ENCODE measurements at regions of chr12 and their contacts with region 1.

Region 1: DNA sequence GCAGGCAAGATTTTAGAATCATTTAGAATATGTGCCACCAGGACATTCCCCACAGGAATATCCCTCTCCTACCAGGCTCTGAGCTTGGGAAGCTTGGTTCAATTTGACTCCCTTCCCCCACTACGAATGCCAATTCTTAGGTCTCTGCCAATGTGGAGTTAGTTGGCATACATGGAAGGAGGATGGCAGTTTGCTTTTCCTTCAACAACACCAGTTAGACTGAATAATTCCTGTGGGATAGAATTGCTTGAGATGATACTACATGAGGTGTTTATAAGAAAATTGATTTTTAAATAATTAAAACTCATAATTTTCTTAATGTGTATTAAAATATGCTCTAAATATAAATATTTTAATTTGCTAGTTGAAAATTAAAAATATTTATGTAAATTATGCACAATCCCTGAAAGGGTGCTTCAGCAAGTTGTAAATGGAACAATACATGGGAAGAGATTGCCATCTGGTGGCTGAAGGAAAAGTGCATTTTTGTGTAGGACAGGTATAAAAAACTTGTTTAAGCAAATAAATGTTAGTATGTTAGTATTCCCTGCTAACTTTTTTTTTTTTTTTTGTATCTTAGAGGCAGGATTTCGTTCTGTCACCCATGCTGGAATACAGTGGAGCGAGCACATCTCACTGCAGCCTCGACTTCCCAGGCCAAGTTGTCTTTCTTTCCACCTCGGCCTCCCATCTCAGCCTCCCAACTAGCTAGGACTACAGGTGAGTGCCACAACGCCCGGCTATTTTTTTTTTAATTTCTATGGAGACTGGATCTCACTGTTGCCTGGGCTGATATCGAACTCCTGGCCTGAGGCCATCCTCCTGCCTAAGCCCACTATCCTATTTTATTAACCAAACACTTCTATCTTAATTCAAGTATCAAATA is 25.8 kb upstream of the STRAP start:
- DNase-seq: peak in 7 of 9 experiments; percentile 15 to 76 (median 43)
- ATAC-seq: peak; percentile 63
- H3K4me3 ChIP-seq: no peak overlapping the region
- H3K4me3 Mint-ChIP-seq: no peak overlapping the region
- H3K27ac ChIP-seq: no peak overlapping the region
- H3K27ac Mint-ChIP-seq: no peak overlapping the region
- H3K4me1 ChIP-seq: no peaks in the 10 kb centered on the region
- H3K4me1 Mint-ChIP-seq: no peaks in the 10 kb centered on the region
- H3K27me3 ChIP-seq: no peaks in the 10 kb centered on the region
- H3K27me3 Mint-ChIP-seq: peaks cover 22% of the 10 kb centered on the region
- CTCF ChIP-seq: peak; percentile 97

Region 2: DNA sequence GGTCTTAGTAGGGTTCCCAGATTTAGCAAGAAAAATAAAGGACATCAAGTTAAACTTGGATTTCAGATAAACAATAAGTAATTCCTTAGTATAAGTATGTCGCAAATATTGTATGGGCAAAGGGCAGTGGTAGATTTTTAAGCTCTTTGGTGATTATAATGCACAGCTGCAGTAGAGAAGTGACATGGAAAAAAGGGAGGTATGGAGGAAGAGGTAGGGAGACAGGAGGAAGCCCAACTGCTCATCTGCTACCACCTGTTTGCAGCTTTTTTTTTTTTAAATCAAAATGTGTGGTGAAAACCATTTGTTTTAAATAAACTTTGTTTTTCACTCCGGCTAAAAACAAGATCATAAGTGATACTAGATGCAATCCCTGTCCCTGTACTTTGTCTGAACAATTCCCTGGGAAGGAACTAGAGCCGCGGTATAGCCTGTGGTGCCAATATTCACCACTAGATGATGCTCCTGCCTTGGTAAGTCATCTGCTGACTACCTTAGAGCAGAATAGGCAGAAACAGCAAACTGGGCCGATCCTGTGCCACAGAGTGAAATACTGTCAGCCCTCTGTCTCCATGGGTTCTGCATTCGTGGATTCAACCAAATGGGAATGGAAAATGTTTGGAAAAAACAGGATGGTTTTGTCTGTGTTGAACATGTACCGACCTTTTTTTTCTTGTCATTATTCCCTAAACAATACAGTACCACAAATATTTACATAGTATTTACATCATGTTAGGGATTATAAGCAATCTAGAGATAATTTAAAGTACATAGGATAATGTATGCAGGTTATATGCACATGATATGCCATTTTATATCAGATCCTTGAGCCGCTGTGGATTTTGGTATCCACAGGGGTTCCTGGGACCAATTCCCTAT is 1226.3 kb before region 1 on chr12:
- CTCF ChIA-PET with region 1: no interaction called
- POLR2A ChIA-PET with region 1: no interaction called
- intact Hi-C with region 1: loop called in 1 of 2 experiments (anchors 10 kb)
- DNase-seq: peak; percentile 32 to 77 (median 66)
- ATAC-seq: peak; percentile 100
- H3K4me3 ChIP-seq: no peak overlapping the region
- H3K4me3 Mint-ChIP-seq: no peak overlapping the region
- H3K27ac ChIP-seq: no peak overlapping the region
- H3K27ac Mint-ChIP-seq: no peak overlapping the region
- H3K4me1 ChIP-seq: no peaks in the 10 kb centered on the region
- H3K4me1 Mint-ChIP-seq: peaks cover 2% of the 10 kb centered on the region
- H3K27me3 ChIP-seq: no peaks in the 10 kb centered on the region
- H3K27me3 Mint-ChIP-seq: peaks cover 2% of the 10 kb centered on the region
- CTCF ChIP-seq: peak; percentile 99

Region 3: GRCh38 chr12:15151161-15152120 is 704.9 kb before region 1 on chr12:
- CTCF ChIA-PET with region 1: no interaction called
- POLR2A ChIA-PET with region 1: no interaction called
- intact Hi-C with region 1: loop called in 1 of 2 experiments (anchors 2 kb)
- DNase-seq: peak in 2 of 9 experiments; percentile 1 to 10
- ATAC-seq: no peak
- H3K4me3 ChIP-seq: no peak overlapping the region
- H3K4me3 Mint-ChIP-seq: no peak overlapping the region
- H3K27ac ChIP-seq: no peak overlapping the region
- H3K27ac Mint-ChIP-seq: no peak overlapping the region
- H3K4me1 ChIP-seq: no peaks in the 10 kb centered on the region
- H3K4me1 Mint-ChIP-seq: no peaks in the 10 kb centered on the region
- H3K27me3 ChIP-seq: no peaks in the 10 kb centered on the region
- H3K27me3 Mint-ChIP-seq: peaks cover 18% of the 10 kb centered on the region
- CTCF ChIP-seq: peak; percentile 16

Region 4: DNA sequence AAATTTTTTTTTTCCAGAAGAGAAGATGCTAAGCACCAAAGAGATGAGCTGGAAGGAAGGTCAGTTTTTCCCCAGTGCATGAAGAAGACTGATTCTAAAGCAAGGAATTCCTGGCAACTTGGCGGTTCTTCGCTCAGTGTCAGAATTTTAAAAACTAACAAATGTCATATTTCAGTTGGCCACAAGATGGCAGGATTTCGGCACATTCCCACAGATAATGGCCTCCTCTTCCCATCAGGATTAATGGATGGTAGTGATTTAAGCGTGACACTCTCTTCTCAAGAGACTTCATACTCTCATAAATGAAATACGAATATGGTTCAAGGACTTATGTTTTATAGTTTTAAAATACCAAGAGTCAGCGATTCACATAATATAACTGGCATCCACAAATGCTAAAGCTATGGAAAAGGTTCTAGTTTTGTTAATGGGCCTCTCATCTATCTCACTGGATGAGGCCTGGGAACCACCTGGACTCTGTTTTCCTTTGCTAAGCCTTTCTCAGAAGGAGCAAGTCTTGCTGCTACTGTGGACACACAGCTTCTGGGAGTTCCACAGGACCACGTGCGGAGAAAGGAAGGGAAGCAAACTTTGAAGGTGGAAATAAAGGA is 580.1 kb before region 1 on chr12:
- CTCF ChIA-PET with region 1: interaction called, 6 read pairs
- POLR2A ChIA-PET with region 1: no interaction called
- intact Hi-C with region 1: loop called (anchors 1 to 2 kb)
- DNase-seq: peak in 2 of 9 experiments; percentile 18 to 25
- ATAC-seq: no peak
- H3K4me3 ChIP-seq: no peak overlapping the region
- H3K4me3 Mint-ChIP-seq: no peak overlapping the region
- H3K27ac ChIP-seq: no peak overlapping the region
- H3K27ac Mint-ChIP-seq: no peak overlapping the region
- H3K4me1 ChIP-seq: no peaks in the 10 kb centered on the region
- H3K4me1 Mint-ChIP-seq: peaks cover 9% of the 10 kb centered on the region
- H3K27me3 ChIP-seq: no peaks in the 10 kb centered on the region
- H3K27me3 Mint-ChIP-seq: peaks cover 9% of the 10 kb centered on the region
- CTCF ChIP-seq: peak; percentile 62

Region 5: DNA sequence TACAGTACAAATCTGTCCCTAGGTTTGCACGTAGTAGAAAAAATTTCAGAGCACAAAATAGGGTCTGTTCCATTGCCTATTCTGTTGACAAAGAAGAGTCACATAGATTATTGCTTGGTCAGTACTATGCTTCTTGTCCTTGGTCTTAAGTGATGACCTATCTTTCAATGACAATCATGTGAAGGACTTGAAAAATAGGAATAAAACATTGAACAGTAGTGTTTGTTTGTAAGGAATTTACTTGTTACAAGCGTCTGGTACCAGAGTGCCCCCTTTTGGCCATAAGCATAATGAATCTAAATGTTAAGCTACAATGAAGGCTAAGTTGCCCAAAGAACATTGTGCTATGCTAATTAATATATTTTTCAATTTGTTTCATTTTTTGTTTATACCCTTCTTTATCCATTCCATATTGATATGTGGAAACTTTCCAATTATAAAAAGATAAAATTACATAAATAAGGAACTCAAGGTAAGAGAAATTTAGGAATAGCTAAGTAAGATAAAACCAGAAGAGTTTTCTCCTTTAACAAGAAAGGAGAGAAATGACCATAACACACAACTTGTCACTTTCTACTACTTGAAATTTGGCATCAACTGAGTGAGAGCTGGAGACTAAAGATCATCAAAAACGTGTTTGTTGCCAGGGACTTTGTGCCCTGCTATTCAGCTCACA is 271.8 kb before region 1 on chr12:
- CTCF ChIA-PET with region 1: interaction called, 80 read pairs
- POLR2A ChIA-PET with region 1: no interaction called
- intact Hi-C with region 1: no loop called
- DNase-seq: peak in 4 of 9 experiments; percentile 16 to 77 (median 53)
- ATAC-seq: peak; percentile 52
- H3K4me3 ChIP-seq: no peak overlapping the region
- H3K4me3 Mint-ChIP-seq: no peak overlapping the region
- H3K27ac ChIP-seq: no peak overlapping the region
- H3K27ac Mint-ChIP-seq: no peak overlapping the region
- H3K4me1 ChIP-seq: no peaks in the 10 kb centered on the region
- H3K4me1 Mint-ChIP-seq: peaks cover 4% of the 10 kb centered on the region
- H3K27me3 ChIP-seq: peaks cover 0 to 3% of the 10 kb centered on the region in 2 experiments
- H3K27me3 Mint-ChIP-seq: no peaks in the 10 kb centered on the region
- CTCF ChIP-seq: peak; percentile 77

Region 6: DNA sequence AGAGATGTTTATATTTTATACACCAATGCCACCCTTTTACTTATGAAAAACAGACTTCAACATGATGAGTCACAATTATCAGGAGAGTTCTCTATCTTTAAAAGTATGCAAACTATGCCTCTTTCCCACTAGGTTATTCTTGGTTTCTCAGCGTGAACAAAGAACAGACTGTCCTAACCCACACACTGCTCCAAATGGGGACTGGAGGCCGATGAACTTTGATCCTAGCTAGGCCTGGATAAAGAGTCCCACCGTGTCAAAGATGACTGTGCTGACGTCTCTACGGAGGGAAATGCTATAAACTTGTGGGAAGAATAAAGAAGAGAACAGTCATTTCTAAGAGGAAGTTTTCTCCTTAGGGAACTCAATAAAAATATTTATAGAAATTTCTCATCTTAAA is 227.2 kb before region 1 on chr12:
- CTCF ChIA-PET with region 1: no interaction called
- POLR2A ChIA-PET with region 1: no interaction called
- intact Hi-C with region 1: no loop called
- DNase-seq: no peak
- ATAC-seq: no peak
- H3K4me3 ChIP-seq: no peak overlapping the region
- H3K4me3 Mint-ChIP-seq: no peak overlapping the region
- H3K27ac ChIP-seq: no peak overlapping the region
- H3K27ac Mint-ChIP-seq: no peak overlapping the region
- H3K4me1 ChIP-seq: no peaks in the 10 kb centered on the region
- H3K4me1 Mint-ChIP-seq: no peaks in the 10 kb centered on the region
- H3K27me3 ChIP-seq: no peaks in the 10 kb centered on the region
- H3K27me3 Mint-ChIP-seq: peaks cover 3% of the 10 kb centered on the region
- CTCF ChIP-seq: no peak

Region 7: DNA sequence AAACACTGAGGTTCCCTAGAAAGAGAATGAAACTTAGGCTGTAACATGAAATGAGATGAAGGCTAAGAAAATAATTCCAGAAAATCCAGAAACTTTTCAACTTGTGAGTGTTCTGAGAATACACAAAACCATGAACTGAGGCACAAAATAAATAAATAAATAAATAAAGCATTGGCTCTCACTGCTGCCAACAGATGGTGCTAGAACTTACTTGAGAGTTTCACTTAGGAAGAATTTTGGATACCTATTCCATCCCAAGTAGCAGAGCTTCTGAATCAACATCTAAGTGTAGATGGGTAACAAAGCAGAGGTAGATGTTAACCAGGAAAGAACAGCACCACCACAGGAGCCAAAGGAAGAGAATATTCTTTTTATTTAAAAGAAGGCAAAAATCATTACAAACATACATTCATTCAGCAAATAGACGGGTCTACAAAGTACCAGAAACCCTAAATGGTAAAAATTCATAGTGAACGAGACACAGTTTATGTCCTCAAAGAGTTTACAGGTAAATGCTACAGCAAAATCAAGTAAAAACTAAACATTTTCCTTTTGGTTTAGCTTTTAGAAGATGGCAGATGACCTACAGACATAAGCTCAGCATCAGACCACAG is 83.8 kb before region 1 on chr12:
- CTCF ChIA-PET with region 1: interaction called, 15 read pairs
- POLR2A ChIA-PET with region 1: no interaction called
- intact Hi-C with region 1: loop called (anchors 1 kb)
- DNase-seq: peak in 2 of 9 experiments; percentile 28 to 45
- ATAC-seq: no peak
- H3K4me3 ChIP-seq: no peak overlapping the region
- H3K4me3 Mint-ChIP-seq: no peak overlapping the region
- H3K27ac ChIP-seq: no peak overlapping the region
- H3K27ac Mint-ChIP-seq: no peak overlapping the region
- H3K4me1 ChIP-seq: no peaks in the 10 kb centered on the region
- H3K4me1 Mint-ChIP-seq: no peaks in the 10 kb centered on the region
- H3K27me3 ChIP-seq: no peaks in the 10 kb centered on the region
- H3K27me3 Mint-ChIP-seq: peaks cover 12% of the 10 kb centered on the region
- CTCF ChIP-seq: peak; percentile 39

Region 8: DNA sequence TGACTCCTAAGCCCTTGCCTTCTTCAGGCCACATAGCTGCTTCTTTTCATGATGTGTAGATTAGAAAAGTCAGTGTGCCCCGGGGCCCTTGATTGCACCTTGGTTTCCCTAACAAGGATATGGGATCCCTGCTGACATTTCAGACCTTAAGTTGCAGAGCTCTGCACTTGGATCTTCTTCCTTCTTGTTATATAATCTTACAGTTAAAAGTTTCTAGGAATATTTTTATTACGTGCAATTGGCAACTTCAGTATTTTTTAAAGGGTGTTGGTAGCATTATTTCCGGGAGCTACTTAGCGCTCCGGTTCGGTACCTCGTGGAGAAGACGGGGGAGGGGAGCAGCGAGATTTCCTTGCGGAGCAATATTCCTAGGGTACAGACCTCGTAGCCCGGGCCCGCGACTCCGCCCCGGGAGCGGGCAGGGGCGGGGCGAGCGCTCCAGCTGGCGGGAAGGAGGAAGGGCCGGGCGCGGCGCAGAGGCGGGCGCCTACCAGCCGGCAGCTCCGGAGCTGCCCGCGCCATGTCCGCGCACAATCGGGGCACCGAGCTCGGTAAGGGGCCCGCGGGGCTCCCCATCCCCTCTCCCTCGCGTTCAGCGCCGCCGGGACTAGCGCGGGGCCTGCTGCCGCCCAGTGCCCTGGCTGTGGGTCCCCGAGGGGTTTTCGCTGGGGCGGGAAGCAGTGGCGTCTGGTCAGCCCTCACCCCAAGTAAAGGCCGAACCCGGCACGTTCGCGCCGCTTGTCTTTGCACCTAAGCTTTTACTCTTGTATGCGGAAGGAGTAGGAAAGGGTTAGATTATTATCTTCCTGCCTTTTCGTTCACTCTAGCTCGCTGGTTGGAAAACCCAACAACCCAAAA is 54.8 kb after region 1 on chr12 and contains the start of gene DERA:
- CTCF ChIA-PET with region 1: no interaction called
- POLR2A ChIA-PET with region 1: interaction called, 4 read pairs
- intact Hi-C with region 1: loop called in 1 of 2 experiments (anchors 2 kb)
- DNase-seq: peak; percentile 2 to 77 (median 56)
- ATAC-seq: peak; percentile 89
- H3K4me3 ChIP-seq: peak within 1 kb of the TSS; percentile 57 to 79
- H3K4me3 Mint-ChIP-seq: peak within 1 kb of the TSS; percentile 90
- H3K27ac ChIP-seq: peak within 1 kb of the TSS; percentile 61 to 70
- H3K27ac Mint-ChIP-seq: peak within 1 kb of the TSS; percentile 81
- H3K4me1 ChIP-seq: peaks cover 6% of the 10 kb centered on the region
- H3K4me1 Mint-ChIP-seq: peaks cover 30% of the 10 kb centered on the region
- H3K27me3 ChIP-seq: no peaks in the 10 kb centered on the region
- H3K27me3 Mint-ChIP-seq: no peaks in the 10 kb centered on the region
- CTCF ChIP-seq: no peak
- total RNA-seq, gene DERA: 4.9 to 5.1 TPM